K562 (cell line): ENCODE measurements at regions of chr6 and their contacts with region 1.

Region 1: GRCh38 chr6:6676910-6677441 is 88.5 kb downstream of the LY86 start:
- DNase-seq: peak; percentile 73 to 91 (median 75)
- ATAC-seq: peak; percentile 83
- H3K4me3 ChIP-seq: no peak overlapping the region
- H3K27ac ChIP-seq: no peak overlapping the region
- H3K4me1 ChIP-seq: peaks cover 8 to 38% of the 10 kb centered on the region in 2 experiments; a peak in 4 of 5 replicates
- H3K27me3 ChIP-seq: no peaks in the 10 kb centered on the region
- CTCF ChIP-seq: peak; percentile 92 to 97 (median 97)
- EP300 ChIP-seq: peak; percentile 13; the same call in 1 of the 2 replicates
- POLR2A ChIP-seq: no peak
- RAD21 ChIP-seq: peak; percentile 98

Region 2: GRCh38 chr6:6556738-6557505 is 120.1 kb before region 1 on chr6:
- CTCF ChIA-PET with region 1: no interaction called
- POLR2A ChIA-PET with region 1: no interaction called
- in situ Hi-C with region 1: no loop called
- intact Hi-C with region 1: loop called (anchors 1 kb)
- DNase-seq: peak; percentile 73 to 81 (median 76)
- ATAC-seq: peak; percentile 97
- H3K4me3 ChIP-seq: no peak overlapping the region
- H3K27ac ChIP-seq: no peak overlapping the region
- H3K4me1 ChIP-seq: peaks cover 0 to 3% of the 10 kb centered on the region in 2 experiments; a peak in 1 of 5 replicates
- H3K27me3 ChIP-seq: peaks cover 5 to 34% of the 10 kb centered on the region in 2 experiments; a peak in 4 of 5 replicates
- CTCF ChIP-seq: peak; percentile 93 to 97 (median 95)
- EP300 ChIP-seq: peak; percentile 21; the same call in 1 of the 2 replicates
- POLR2A ChIP-seq: no peak
- RAD21 ChIP-seq: peak; percentile 90 to 92

Region 3: GRCh38 chr6:6696867-6697531 is 20.0 kb after region 1 on chr6:
- CTCF ChIA-PET with region 1: interaction called, 4 read pairs
- POLR2A ChIA-PET with region 1: no interaction called
- in situ Hi-C with region 1: no loop called
- intact Hi-C with region 1: loop called (anchors 1 kb)
- DNase-seq: peak; percentile 73 to 94 (median 78)
- ATAC-seq: peak; percentile 62
- H3K4me3 ChIP-seq: no peak overlapping the region
- H3K27ac ChIP-seq: no peak overlapping the region; the same call in 2 of the 3 replicates
- H3K4me1 ChIP-seq: peaks cover 42 to 64% of the 10 kb centered on the region in 2 experiments
- H3K27me3 ChIP-seq: no peaks in the 10 kb centered on the region; a peak in 1 of 5 replicates
- CTCF ChIP-seq: peak; percentile 90 to 99 (median 93)
- EP300 ChIP-seq: no peak
- POLR2A ChIP-seq: no peak
- RAD21 ChIP-seq: peak; percentile 79 to 83

Region 4: GRCh38 chr6:6724539-6725467 is 47.8 kb after region 1 on chr6:
- CTCF ChIA-PET with region 1: interaction called, 3 read pairs
- POLR2A ChIA-PET with region 1: no interaction called
- in situ Hi-C with region 1: no loop called
- intact Hi-C with region 1: loop called (anchors 1 kb)
- DNase-seq: peak; percentile 60 to 82 (median 71)
- ATAC-seq: peak; percentile 90
- H3K4me3 ChIP-seq: no peak overlapping the region
- H3K27ac ChIP-seq: peak overlapping the region; percentile 24; the same call in 1 of the 3 replicates
- H3K4me1 ChIP-seq: peaks cover 10 to 23% of the 10 kb centered on the region in 2 experiments; a peak in 4 of 5 replicates
- H3K27me3 ChIP-seq: no peaks in the 10 kb centered on the region
- CTCF ChIP-seq: peak; percentile 80 to 92 (median 88)
- EP300 ChIP-seq: no peak
- POLR2A ChIP-seq: no peak
- RAD21 ChIP-seq: peak; percentile 80 to 87

Region 5: GRCh38 chr6:6749702-6750491 is 72.9 kb after region 1 on chr6:
- CTCF ChIA-PET with region 1: no interaction called
- POLR2A ChIA-PET with region 1: no interaction called
- in situ Hi-C with region 1: no loop called
- intact Hi-C with region 1: loop called (anchors 5 kb)
- DNase-seq: peak; percentile 64 to 93 (median 80)
- ATAC-seq: peak; percentile 95
- H3K4me3 ChIP-seq: no peak overlapping the region
- H3K27ac ChIP-seq: peak overlapping the region; percentile 74; the same call in 2 of the 3 replicates
- H3K4me1 ChIP-seq: peaks cover 37 to 38% of the 10 kb centered on the region in 2 experiments
- H3K27me3 ChIP-seq: no peaks in the 10 kb centered on the region
- CTCF ChIP-seq: peak; percentile 30 to 49 (median 33); a peak in 4 of 6 replicates
- EP300 ChIP-seq: peak; percentile 85
- POLR2A ChIP-seq: peak; percentile 49
- RAD21 ChIP-seq: peak in 1 of 2 experiments; percentile 44; a peak in 3 of 4 replicates

Region 6: DNA sequence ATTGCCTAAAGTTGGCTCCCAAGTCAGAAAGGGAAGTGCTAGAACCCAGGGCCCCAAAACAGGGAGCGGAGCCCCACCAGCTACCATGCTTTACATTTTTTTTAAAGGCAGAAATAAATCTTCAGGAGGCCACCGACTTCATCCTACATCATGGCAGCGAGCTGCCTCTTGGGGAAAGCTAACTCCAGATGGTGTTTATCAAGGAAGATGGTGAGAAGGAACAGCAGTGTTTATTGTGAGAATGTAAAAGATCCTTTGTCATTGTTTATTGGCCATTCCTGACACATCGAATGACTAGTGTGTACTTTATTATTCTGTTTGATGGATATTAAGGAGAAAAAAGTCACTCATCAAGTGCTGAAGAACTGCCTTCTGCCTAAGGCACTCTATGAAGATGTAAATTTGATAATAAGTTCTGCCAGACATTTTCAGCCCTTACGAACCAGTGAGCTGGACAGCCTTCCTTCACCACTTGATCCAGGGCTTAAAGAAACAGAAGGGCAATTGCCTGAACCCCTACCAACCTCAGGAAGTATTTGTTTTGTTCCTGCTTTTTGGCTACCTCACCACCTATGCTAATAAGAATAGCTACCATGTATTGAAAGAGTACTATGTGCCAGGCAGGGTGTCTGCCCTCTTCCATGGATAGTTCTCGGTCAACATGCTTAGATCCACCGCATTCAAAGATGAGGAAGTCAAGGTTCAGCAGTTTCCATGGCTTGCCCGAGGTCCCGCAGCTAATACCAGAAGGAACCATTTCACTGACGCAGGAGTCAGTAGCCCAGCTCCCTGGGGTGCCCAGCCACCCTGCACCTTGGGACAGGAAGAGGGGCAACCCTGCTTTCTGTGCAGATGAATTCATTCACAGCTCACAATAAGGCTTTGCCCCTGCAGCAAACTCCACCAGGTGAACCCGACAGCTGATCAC is 236.1 kb after region 1 on chr6:
- CTCF ChIA-PET with region 1: no interaction called
- POLR2A ChIA-PET with region 1: no interaction called
- in situ Hi-C with region 1: no loop called
- intact Hi-C with region 1: loop called (anchors 5 kb)
- DNase-seq: no peak
- ATAC-seq: no peak
- H3K4me3 ChIP-seq: no peak overlapping the region
- H3K27ac ChIP-seq: no peak overlapping the region
- H3K4me1 ChIP-seq: peaks cover 5 to 16% of the 10 kb centered on the region in 2 experiments; a peak in 4 of 5 replicates
- H3K27me3 ChIP-seq: no peaks in the 10 kb centered on the region
- CTCF ChIP-seq: no peak
- EP300 ChIP-seq: no peak
- POLR2A ChIP-seq: no peak
- RAD21 ChIP-seq: no peak

Region 7: DNA sequence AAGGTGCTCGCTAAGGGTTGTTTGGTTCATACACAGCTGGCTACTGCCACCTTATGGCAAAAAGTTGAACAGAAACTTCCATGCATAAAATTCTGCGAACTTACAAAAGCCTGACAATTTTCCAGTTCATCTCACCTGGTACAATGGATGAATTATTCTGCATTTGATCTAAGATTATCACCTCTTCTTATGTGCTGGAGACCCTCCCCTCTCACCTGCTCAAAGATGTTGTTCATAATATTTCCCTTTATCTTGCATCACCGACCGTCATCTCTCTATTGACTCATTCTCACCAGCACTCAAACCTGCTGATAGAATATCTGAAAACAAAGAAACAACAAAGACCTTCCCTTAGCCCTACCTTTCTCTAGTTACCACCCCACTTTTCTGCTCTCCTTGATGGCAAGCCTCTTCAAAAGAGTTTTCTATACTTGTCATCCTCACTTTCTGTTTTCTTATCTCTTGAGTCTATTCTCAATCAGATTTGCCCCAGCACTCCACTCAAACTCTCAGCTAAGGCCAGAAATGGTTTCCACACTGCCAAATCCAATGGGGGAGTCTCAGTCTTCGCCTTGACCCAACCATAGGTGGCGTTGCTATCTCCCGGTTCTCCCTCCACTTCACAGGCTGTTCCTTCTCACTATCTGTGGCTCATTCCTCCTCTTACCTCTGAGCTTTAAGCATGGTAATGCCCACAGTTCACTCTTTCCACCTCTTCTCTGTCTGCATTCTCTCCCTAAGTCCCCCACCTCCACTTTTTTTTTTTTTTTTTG is 938.8 kb after region 1 on chr6:
- CTCF ChIA-PET with region 1: interaction called, 3 read pairs
- POLR2A ChIA-PET with region 1: no interaction called
- in situ Hi-C with region 1: no loop called
- intact Hi-C with region 1: loop called (anchors 2 kb)
- DNase-seq: peak; percentile 52 to 77 (median 60)
- ATAC-seq: peak; percentile 80
- H3K4me3 ChIP-seq: no peak overlapping the region
- H3K27ac ChIP-seq: no peak overlapping the region
- H3K4me1 ChIP-seq: no peaks in the 10 kb centered on the region
- H3K27me3 ChIP-seq: peaks cover 29 to 34% of the 10 kb centered on the region in 2 experiments
- CTCF ChIP-seq: peak; percentile 73 to 95 (median 82)
- EP300 ChIP-seq: no peak
- POLR2A ChIP-seq: no peak
- RAD21 ChIP-seq: peak; percentile 92 to 94